ENCODE measurements at regions of chr4 and their contacts with region 1.

Region 1: GRCh38 chr4:26028793-26029567 is 115.0 kb downstream of the SMIM20 start:
- DNase-seq: peak; percentile 93
- ATAC-seq: peak; percentile 69
- H3K4me3 Mint-ChIP-seq: peak overlapping the region; percentile 47
- H3K27ac Mint-ChIP-seq: peak overlapping the region; percentile 97
- H3K4me1 Mint-ChIP-seq: peaks cover 53% of the 10 kb centered on the region
- H3K27me3 Mint-ChIP-seq: no peaks in the 10 kb centered on the region; the same call in 1 of the 2 replicates
- CTCF ChIP-seq: peak; percentile 37; the same call in 1 of the 2 replicates

Region 2: GRCh38 chr4:25842229-25842845 is 186.6 kb before region 1 on chr4:
- CTCF ChIA-PET with region 1: interaction called, 10 read pairs
- POLR2A ChIA-PET with region 1: no interaction called
- DNase-seq: peak; percentile 55
- ATAC-seq: peak; percentile 70
- H3K4me3 Mint-ChIP-seq: no peak overlapping the region
- H3K27ac Mint-ChIP-seq: peak overlapping the region; percentile 90
- H3K4me1 Mint-ChIP-seq: peaks cover 54% of the 10 kb centered on the region
- H3K27me3 Mint-ChIP-seq: no peaks in the 10 kb centered on the region
- CTCF ChIP-seq: no peak

Region 3: DNA sequence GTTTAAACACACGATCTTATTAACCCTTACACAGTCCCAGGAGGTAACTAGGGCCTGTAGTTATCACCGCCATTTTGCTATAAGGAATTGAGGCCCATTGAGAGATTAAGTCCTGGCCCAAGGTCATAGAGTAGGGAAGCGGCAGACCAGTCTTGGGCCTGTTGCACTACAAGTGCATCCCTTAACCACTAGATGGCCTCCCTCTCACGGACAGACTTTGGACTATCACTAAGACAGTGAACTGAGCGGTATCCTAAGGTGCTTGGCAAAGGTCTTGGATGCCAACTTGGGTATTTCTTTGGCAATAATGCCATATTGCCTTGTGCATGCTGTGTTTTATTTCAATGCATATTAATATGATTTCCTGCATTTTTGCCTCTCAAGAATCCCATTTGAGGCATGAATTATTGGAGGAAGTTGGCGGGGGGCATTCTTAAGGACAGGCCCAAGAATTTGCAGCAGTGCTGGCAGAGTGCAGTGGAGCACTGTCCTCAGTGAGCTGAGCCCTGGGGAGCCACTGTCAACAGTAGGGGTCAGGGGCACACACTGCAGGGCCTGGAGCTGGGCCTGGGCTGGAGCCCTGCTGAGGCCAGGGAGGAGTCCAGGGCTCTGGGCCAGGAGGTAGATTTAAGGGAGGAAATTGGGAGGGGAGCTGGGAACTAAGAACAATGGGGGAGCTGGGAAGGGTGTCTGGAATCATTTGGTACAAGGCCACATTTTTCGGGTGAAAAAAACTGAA is 32.4 kb after region 1 on chr4:
- CTCF ChIA-PET with region 1: interaction called, 11 read pairs
- POLR2A ChIA-PET with region 1: interaction called, 3 read pairs
- DNase-seq: peak; percentile 57
- ATAC-seq: peak; percentile 99
- H3K4me3 Mint-ChIP-seq: no peak overlapping the region
- H3K27ac Mint-ChIP-seq: no peak overlapping the region
- H3K4me1 Mint-ChIP-seq: 0 out of 2 replicates have a peak, but pooled peaks cover 4% of the 10 kb centered on the region
- H3K27me3 Mint-ChIP-seq: no peaks in the 10 kb centered on the region
- CTCF ChIP-seq: peak; percentile 74

Region 4: DNA sequence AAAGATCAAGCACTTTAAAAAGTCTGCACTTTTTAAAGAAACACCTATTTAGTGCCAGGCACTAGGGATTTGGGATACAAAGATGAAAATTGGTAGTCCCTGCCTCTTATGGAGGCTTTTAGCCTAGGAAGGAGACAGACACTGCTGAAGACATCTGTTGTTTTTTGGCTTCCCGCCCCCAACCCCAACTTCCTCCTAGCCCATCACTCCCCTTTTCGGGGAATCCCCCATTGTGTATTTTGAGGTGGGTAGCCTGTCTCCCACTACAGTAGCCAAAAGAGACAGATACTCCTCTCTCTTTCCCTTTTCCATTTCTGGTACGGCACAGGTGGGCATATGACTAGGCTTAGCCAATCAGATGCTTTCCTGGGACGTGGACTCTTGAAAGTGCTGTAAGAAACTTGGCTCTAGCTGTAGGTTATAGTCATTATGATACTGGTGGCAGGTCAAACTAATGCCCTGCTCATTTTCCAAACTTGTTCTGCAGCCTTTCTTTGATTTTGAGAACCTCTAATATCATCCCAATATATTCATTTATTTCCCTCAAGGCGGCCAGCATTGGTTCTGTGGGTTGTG is 97.3 kb after region 1 on chr4:
- CTCF ChIA-PET with region 1: no interaction called
- POLR2A ChIA-PET with region 1: no interaction called
- DNase-seq: no peak
- ATAC-seq: no peak
- H3K4me3 Mint-ChIP-seq: no peak overlapping the region
- H3K27ac Mint-ChIP-seq: no peak overlapping the region
- H3K4me1 Mint-ChIP-seq: no peaks in the 10 kb centered on the region
- H3K27me3 Mint-ChIP-seq: no peaks in the 10 kb centered on the region; the same call in 1 of the 2 replicates
- CTCF ChIP-seq: no peak

Region 5: DNA sequence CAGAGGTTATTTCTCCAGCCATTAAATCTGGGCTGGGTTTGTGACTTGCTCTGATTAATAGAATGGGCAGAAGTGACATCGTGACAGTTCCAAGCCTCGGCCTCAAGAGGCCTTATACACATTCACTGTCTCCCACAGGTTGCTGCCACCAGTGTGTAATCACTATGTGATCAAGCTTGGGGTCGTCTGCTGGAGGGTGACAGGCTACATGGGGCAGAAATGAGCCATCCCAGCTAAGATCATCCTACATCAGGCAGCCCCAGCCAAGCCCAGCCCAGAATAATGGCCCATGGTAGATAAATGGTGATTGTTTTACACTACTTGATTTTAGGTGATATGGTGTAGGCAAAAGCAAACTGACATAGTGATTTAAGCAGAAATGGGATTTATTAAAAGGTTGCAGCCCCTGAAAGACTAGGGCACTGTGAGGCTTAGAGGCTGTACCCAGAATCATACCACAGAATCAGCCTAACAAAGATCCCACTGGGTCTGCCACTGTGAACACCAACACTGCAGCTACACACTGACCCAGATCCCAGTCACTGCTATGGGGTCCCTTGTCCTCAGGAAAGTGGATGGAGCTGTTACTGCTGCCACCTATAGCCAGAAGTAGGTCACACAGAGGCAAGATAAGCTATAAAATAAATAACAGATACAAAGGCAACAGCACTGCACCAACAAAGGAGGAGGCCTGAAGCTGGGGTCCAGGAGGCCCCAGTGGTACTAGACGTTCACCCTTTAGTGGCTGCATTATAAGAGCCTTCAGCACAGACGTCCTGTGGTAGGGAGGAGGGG is 132.2 kb after region 1 on chr4:
- CTCF ChIA-PET with region 1: interaction called, 11 read pairs
- POLR2A ChIA-PET with region 1: no interaction called
- DNase-seq: peak; percentile 33
- ATAC-seq: peak; percentile 94
- H3K4me3 Mint-ChIP-seq: no peak overlapping the region
- H3K27ac Mint-ChIP-seq: no peak overlapping the region
- H3K4me1 Mint-ChIP-seq: peaks cover 16% of the 10 kb centered on the region
- H3K27me3 Mint-ChIP-seq: no peaks in the 10 kb centered on the region
- CTCF ChIP-seq: no peak

Region 6: GRCh38 chr4:26325191-26325590 is 296.2 kb after region 1 on chr4:
- CTCF ChIA-PET with region 1: interaction called, 12 read pairs
- POLR2A ChIA-PET with region 1: interaction called, 8 read pairs
- DNase-seq: no peak
- ATAC-seq: peak; percentile 9; the same call in 1 of the 2 replicates
- H3K4me3 Mint-ChIP-seq: peak overlapping the region; percentile 50
- H3K27ac Mint-ChIP-seq: peak overlapping the region; percentile 70
- H3K4me1 Mint-ChIP-seq: peaks cover 48% of the 10 kb centered on the region
- H3K27me3 Mint-ChIP-seq: no peaks in the 10 kb centered on the region
- CTCF ChIP-seq: no peak

Region 7: DNA sequence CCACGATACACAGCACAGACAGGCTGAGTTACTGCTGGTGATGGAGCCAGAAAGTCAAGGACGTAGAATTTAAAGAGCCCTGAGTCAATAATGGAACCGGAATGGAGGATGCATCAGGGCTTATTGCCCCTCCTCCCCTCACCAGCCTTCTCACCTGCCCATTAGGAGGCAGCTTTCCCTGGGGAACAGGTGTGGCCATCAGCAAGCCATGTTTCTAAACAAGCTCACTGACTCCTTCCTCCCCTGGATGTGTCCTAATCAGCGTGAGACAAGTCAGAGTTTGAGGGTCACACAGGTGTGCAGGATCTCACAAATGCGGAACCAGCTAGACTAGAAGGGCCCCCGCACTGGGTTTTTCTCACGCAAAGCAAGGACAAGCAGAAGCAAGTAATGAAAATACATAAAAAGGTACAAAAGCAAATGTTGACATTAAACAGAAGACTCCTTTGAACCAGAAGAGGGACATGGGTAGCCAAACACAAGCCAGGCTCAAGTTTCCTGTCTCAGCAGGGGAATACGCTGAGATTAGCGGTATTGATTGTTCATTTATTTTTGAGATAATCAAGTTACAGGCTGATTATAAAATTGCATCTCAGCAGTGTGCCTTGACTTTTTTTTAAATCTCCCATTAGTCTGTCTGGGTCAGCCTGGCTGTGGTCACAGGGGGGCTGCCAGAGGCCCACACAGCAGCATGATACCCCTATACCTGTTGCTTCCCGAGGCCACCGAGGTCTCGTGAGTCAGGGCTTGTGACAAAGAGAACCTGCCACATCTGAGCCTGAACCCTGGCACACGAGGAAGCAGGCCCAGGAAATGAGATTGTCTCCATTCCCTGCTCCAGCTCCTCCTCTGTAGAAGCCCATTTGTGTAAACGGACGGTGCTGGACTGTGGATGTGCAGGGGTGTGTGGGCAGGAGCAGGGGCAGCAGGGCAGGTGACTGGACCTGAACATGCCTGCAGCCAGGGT is 423.9 kb after region 1 on chr4:
- CTCF ChIA-PET with region 1: interaction called, 10 read pairs
- POLR2A ChIA-PET with region 1: no interaction called
- DNase-seq: peak; percentile 28
- ATAC-seq: peak; percentile 76
- H3K4me3 Mint-ChIP-seq: no peak overlapping the region
- H3K27ac Mint-ChIP-seq: peak overlapping the region; percentile 37
- H3K4me1 Mint-ChIP-seq: peaks cover 16% of the 10 kb centered on the region
- H3K27me3 Mint-ChIP-seq: no peaks in the 10 kb centered on the region
- CTCF ChIP-seq: no peak

Measured in WTC11 (cell line).